ENCODE measurements at regions of chr2 and their contacts with region 1.

Region 1: GRCh38 chr2:223993621-223994232 is 36.5 kb downstream of the MRPL44 start:
- DNase-seq: peak in 2 of 4 donors; percentile 75 to 86
- ATAC-seq: peak; percentile 85
- H3K4me3 ChIP-seq: no peak overlapping the region
- H3K27ac ChIP-seq: no peak overlapping the region
- H3K4me1 ChIP-seq: no peaks in the 10 kb centered on the region
- H3K27me3 ChIP-seq: no peaks in the 10 kb centered on the region
- CTCF ChIP-seq: peak; percentile 77 to 80

Region 2: GRCh38 chr2:224284134-224284946 is 290.6 kb after region 1 on chr2:
- intact Hi-C with region 1: loop called in 1 of 2 experiments (anchors 5 kb)
- DNase-seq: peak in 2 of 4 donors; percentile 36 to 44
- ATAC-seq: peak; percentile 76
- H3K4me3 ChIP-seq: no peak overlapping the region
- H3K27ac ChIP-seq: no peak overlapping the region
- H3K4me1 ChIP-seq: no peaks in the 10 kb centered on the region
- H3K27me3 ChIP-seq: peaks cover 0 to 1% of the 10 kb centered on the region in 2 donors
- CTCF ChIP-seq: peak; percentile 23 to 46

Measured in left lung (tissue), 14 donors.